Psoas muscle (tissue), 8 donors: ENCODE measurements at regions of chr14 and their contacts with region 1.

Region 1: DNA sequence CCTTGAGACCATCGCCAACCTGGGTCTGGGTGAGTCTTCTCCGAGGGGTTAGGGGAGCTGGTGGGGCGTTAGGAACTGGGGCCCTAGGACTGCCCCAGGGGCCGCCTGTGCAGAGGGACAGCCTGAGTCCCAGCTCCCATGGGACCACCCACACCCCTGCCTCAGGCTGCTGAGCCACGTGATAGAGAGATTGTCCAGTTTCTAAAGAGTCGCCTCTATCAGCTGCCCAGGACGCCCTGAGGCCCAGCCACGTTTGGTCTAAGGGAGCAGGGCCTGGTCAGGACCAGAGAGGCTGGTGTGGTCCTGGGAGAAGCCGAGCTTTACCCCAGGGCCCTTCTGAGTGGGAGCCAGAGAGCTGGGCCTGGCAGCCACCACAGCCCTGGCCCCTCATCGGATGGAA is 107.1 kb downstream of the LGMN start:
- DNase-seq: no peak
- ATAC-seq: no peak
- H3K4me3 ChIP-seq: no peak overlapping the region
- H3K27ac ChIP-seq: no peak overlapping the region
- H3K4me1 ChIP-seq: no peaks in the 10 kb centered on the region
- H3K27me3 ChIP-seq: no peaks in the 10 kb centered on the region
- CTCF ChIP-seq: no peak

Region 2: GRCh38 chr14:92578511-92578910 is 62.8 kb before region 1 on chr14:
- intact Hi-C with region 1: loop called in 1 of 2 experiments (anchors 2 kb)
- DNase-seq: no peak
- ATAC-seq: no peak
- H3K4me3 ChIP-seq: no peak overlapping the region
- H3K27ac ChIP-seq: no peak overlapping the region
- H3K4me1 ChIP-seq: no peaks in the 10 kb centered on the region
- H3K27me3 ChIP-seq: no peaks in the 10 kb centered on the region
- CTCF ChIP-seq: no peak